Gastrocnemius medialis (tissue), 4 donors: ENCODE measurements at regions of chr7 and their contacts with region 1.

Region 1: GRCh38 chr7:5780801-5781496 is 514 bp downstream of the RNF216 start:
- DNase-seq: peak; percentile 11 to 54
- ATAC-seq: peak; percentile 76 to 81
- H3K4me3 ChIP-seq: peak overlapping the region; percentile 63 to 92 (median 78)
- H3K27ac ChIP-seq: peak overlapping the region; percentile 87 to 96 (median 94)
- H3K4me1 ChIP-seq: peaks cover 28 to 29% of the 10 kb centered on the region in 2 donors
- H3K27me3 ChIP-seq: no peaks in the 10 kb centered on the region
- CTCF ChIP-seq: no peak
- POLR2A ChIP-seq: no peak

Region 2: DNA sequence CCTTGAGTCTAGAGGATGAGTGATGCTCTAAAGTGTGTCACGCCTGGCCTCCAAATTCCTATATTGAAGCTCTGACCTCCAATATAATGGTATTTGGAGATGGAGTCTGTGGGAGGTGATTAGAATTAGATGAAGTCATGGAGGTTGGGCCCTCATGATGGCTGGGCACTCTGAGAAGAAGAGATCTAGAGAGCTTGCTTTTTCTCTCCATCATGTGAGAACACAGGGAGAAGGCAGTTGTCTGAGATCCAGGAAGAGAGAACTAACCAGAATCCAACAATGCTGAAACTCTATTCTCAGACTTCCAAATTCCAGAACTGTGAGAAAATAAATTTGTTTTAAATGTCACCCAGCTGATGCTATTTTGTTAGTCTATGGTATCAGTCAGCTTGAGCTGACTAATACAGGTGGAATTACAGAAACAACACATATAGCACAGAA is 14.6 kb before region 1 on chr7:
- in situ Hi-C with region 1: no loop called
- intact Hi-C with region 1: no loop called
- DNase-seq: no peak
- ATAC-seq: no peak
- H3K4me3 ChIP-seq: no peak overlapping the region
- H3K27ac ChIP-seq: no peak overlapping the region
- H3K4me1 ChIP-seq: peaks cover 16 to 19% of the 10 kb centered on the region in 2 donors
- H3K27me3 ChIP-seq: no peaks in the 10 kb centered on the region
- CTCF ChIP-seq: no peak
- POLR2A ChIP-seq: no peak

Region 3: GRCh38 chr7:5822742-5823503 is 42.0 kb after region 1 on chr7:
- in situ Hi-C with region 1: no loop called
- intact Hi-C with region 1: loop called (anchors 5 kb)
- DNase-seq: peak; percentile 93 to 95
- ATAC-seq: peak; percentile 100
- H3K4me3 ChIP-seq: peak overlapping the region; percentile 70 to 85 (median 75)
- H3K27ac ChIP-seq: peak overlapping the region; percentile 83 to 93 (median 86)
- H3K4me1 ChIP-seq: peaks cover 0 to 8% of the 10 kb centered on the region in 2 donors
- H3K27me3 ChIP-seq: no peaks in the 10 kb centered on the region
- CTCF ChIP-seq: peak in 4 of 5 experiments; percentile 28 to 44 (median 38)
- POLR2A ChIP-seq: peak; percentile 24 to 53

Region 4: DNA sequence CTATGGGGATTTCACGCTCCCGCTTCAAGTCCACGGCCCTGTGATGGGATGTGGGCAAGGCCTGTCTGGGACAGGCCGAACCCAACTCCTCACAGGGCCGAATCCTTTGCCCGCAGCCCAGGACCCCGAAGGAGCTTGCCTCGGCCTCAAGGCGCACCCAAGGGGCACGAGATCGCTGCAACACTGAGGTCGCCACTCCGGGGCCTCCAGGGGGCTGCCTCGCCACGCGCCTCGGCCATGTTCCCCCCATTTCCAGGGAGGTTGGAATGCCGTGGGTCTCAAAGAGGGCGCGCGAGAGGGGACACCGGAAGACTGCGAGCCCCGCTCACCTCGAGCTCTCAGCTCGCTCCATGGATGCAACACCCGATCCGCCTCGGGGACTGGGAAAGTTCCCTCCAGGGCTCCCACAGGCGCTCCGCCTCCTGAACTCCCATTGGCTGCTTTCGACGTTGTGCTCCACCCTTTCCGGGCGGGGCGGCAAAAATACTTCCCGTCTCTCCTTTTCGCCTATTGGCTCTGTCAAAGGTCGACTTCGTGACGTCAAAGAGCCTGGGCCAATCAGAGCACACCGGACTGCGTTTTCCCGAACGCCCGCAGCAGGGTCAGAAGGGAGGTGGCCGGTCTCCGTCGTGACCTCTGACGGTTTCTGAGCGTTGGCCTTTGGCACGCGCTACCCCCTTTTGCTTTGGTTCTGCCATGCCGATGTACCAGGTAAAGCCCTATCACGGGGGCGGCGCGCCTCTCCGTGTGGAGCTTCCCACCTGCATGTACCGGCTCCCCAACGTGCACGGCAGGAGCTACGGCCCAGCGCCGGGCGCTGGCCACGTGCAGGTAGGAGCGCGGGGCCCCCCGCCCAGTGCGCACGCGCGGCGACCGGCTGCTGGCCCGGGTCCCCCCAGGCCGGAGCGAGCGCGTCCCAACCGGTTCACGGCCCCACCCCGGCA is 228.0 kb after region 1 on chr7 and contains the starts of genes AIMP2 and PMS2:
- in situ Hi-C with region 1: no loop called
- intact Hi-C with region 1: loop called (anchors 1 kb)
- DNase-seq: peak; percentile 99 to 100
- ATAC-seq: peak; percentile 88 to 90
- H3K4me3 ChIP-seq: peak within 1 kb of the TSS; percentile 66 to 95 (median 80)
- H3K27ac ChIP-seq: peak within 1 kb of the TSS; percentile 89 to 98 (median 92)
- H3K4me1 ChIP-seq: peaks cover 44 to 47% of the 10 kb centered on the region in 2 donors
- H3K27me3 ChIP-seq: no peaks in the 10 kb centered on the region
- CTCF ChIP-seq: peak in 3 of 5 experiments; percentile 7 to 30 (median 17)
- POLR2A ChIP-seq: peak; percentile 86 to 93
- total RNA-seq, gene AIMP2: 99.1 to 272 (median 194) TPM
- total RNA-seq, gene PMS2: 3.6 to 9.0 (median 7.2) TPM